HCT116 (cell line): ENCODE measurements at regions of chr4 and their contacts with region 1.

Region 1: GRCh38 chr4:51965862-51966261 is 54.3 kb downstream of the LRRC66 start:
- DNase-seq: no peak
- ATAC-seq: no peak
- H3K4me3 ChIP-seq: no peak overlapping the region
- H3K27ac ChIP-seq: no peak overlapping the region
- H3K4me1 ChIP-seq: no peaks in the 10 kb centered on the region
- H3K27me3 ChIP-seq: peaks cover 3% of the 10 kb centered on the region; the same call in 1 of the 2 replicates
- CTCF ChIP-seq: no peak
- POLR2A ChIP-seq: no peak
- RAD21 ChIP-seq: no peak

Region 2: GRCh38 chr4:51923343-51923742 is 42.5 kb before region 1 on chr4:
- CTCF ChIA-PET with region 1: no interaction called
- POLR2A ChIA-PET with region 1: no interaction called
- RAD21 ChIA-PET with region 1: no interaction called
- intact Hi-C with region 1: loop called (anchors 10 kb)
- DNase-seq: no peak
- ATAC-seq: no peak
- H3K4me3 ChIP-seq: no peak overlapping the region
- H3K27ac ChIP-seq: no peak overlapping the region
- H3K4me1 ChIP-seq: no peaks in the 10 kb centered on the region
- H3K27me3 ChIP-seq: no peaks in the 10 kb centered on the region
- CTCF ChIP-seq: no peak
- POLR2A ChIP-seq: no peak
- RAD21 ChIP-seq: no peak

Region 3: GRCh38 chr4:52091535-52092200 is 125.8 kb after region 1 on chr4:
- CTCF ChIA-PET with region 1: no interaction called
- POLR2A ChIA-PET with region 1: no interaction called
- RAD21 ChIA-PET with region 1: no interaction called
- intact Hi-C with region 1: no loop called
- DNase-seq: no peak
- ATAC-seq: no peak
- H3K4me3 ChIP-seq: no peak overlapping the region
- H3K27ac ChIP-seq: no peak overlapping the region
- H3K4me1 ChIP-seq: no peaks in the 10 kb centered on the region
- H3K27me3 ChIP-seq: peaks cover 31% of the 10 kb centered on the region
- CTCF ChIP-seq: no peak
- POLR2A ChIP-seq: no peak
- RAD21 ChIP-seq: no peak